Left ventricle myocardium inferior (tissue), 1 donor: ENCODE measurements at regions of chr21 and their contacts with region 1.

Region 1: GRCh38 chr21:37700641-37701202 is 215.5 kb downstream of the KCNJ6 start:
- DNase-seq: no peak
- H3K4me3 ChIP-seq: no peak overlapping the region
- H3K27ac ChIP-seq: no peak overlapping the region
- H3K4me1 ChIP-seq: no peaks in the 10 kb centered on the region
- H3K27me3 ChIP-seq: peaks cover 19% of the 10 kb centered on the region
- CTCF ChIP-seq: peak; percentile 74

Region 2: DNA sequence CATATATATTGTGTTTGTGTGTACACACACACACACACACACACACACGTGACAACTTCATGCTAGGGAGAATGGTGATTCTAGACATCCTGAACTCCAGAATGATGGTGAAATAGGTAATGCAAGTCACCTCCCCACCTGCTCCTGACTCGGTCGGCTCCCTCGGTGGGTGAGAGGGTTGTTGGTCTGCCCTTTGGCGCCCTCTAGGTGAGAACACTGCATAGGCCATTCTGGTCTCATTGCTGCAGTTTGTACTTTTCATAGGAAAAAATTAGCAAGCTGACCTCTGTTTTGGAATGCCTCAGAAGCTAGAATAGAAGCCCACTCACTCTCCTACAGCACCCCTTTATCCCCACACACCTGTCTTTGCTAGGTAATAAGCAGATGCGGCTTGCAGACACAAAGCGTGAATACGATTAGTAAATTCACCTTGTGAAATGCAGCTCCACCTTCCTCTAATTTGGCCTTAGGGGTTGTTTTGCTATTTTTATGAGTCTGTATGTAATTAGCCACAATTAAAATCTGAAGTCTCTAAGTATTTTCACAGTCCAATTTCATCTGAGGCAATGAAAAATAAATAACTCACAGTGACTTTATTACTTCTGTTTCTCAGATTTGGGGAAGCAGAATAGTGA is 426.1 kb after region 1 on chr21:
- intact Hi-C with region 1: loop called (anchors 10 kb)
- DNase-seq: peak; percentile 35
- H3K4me3 ChIP-seq: no peak overlapping the region
- H3K27ac ChIP-seq: no peak overlapping the region
- H3K4me1 ChIP-seq: no peaks in the 10 kb centered on the region
- H3K27me3 ChIP-seq: peaks cover 25% of the 10 kb centered on the region
- CTCF ChIP-seq: peak; percentile 76